ENCODE measurements at regions of chr10 and their contacts with region 1.

Region 1: DNA sequence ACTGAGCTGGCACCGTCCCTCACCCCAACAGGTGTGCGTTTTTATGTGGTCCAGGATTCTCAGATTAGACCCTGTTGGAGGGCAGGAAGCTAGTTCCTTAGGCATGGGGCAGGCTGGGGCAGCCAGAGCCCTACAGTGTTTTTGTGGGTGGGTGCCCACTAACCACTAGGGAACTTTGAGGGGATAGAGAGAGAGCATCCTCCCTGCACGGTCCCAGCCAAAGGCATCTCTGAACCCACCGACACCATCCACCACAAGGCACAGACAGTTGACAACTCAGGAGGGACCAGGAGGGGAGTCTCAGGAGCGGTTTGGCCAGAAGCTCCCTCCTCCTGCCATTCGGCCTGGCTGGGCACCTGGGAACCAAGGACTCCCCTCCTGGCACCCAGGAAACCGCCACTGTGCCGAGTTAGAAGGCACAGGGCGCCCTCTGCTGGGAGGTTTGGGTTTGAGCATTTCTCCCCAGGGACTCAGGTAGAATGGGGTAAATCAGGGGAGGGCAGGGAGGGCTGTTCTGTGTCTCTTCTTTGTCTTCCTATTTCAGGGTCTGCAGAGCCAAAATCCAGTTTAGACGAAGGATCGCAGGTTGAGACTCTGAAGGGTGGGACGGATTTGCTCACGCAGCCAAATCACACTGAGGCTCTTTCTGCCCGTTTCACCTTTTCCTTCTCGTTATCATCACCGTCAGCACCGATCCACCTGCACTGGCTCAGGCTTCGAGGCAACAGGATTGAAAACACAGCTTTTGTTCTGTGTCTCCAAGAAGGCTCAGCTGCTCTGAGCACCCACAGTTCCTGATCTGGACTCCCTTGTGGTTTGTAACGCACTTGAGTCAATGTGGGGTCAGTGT is 84.8 kb upstream of the COL13A1 start:
- DNase-seq: peak; percentile 67
- ATAC-seq: peak; percentile 55
- H3K4me3 Mint-ChIP-seq: no peak overlapping the region
- H3K27ac Mint-ChIP-seq: no peak overlapping the region
- H3K4me1 Mint-ChIP-seq: no peaks in the 10 kb centered on the region
- H3K27me3 Mint-ChIP-seq: peaks cover 6% of the 10 kb centered on the region

Region 2: DNA sequence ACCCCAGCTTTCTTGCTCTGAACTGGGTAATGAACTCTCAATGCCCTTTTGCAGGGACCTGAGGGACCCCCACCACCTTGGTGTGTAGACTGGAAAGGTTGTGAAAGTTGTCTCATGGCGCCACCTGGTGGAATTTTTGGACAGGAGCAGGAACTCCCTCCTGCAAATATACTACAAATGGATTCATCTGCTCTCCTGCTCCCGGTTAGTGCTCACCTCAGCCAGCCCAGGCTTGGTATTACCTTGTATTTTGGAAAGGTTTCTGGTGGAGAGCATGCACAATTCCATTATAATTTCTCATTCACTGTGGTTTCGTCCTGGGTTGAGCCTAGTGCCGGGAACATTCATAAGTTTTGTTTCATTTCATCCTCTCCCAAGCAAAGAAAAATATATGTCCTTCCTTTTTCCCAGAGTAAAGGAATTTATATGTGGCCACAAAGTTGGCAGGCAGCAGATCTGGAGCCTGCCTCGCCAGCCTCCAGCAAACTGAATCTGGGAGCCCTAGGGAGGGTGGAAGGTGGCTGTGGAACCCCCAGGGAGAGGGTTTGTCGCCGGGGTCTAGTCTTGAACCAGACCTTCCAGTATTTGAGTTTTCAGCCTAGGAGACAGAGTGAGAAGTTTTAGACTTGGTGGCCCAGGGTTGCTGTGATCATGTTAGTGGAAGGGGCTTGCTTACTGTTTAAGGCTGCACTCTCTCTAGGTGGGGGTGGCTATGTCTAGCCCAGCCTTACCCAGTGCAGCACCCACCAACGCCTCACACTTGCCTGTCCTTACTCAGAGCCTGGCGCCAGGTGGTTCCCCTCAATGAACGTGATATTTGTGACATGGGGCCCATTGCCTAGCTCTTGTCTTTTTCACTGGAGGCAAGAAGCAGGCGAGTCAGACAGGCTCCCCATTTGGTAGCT is 77.4 kb before region 1 on chr10:
- CTCF ChIA-PET with region 1: interaction called, 55 read pairs
- DNase-seq: peak; percentile 72
- ATAC-seq: peak; percentile 78
- H3K4me3 Mint-ChIP-seq: no peak overlapping the region
- H3K27ac Mint-ChIP-seq: no peak overlapping the region
- H3K4me1 Mint-ChIP-seq: no peaks in the 10 kb centered on the region
- H3K27me3 Mint-ChIP-seq: no peaks in the 10 kb centered on the region

Region 3: GRCh38 chr10:69644658-69645295 is 72.2 kb before region 1 on chr10:
- CTCF ChIA-PET with region 1: interaction called, 55 read pairs
- DNase-seq: peak; percentile 60
- ATAC-seq: no peak
- H3K4me3 Mint-ChIP-seq: no peak overlapping the region
- H3K27ac Mint-ChIP-seq: no peak overlapping the region
- H3K4me1 Mint-ChIP-seq: no peaks in the 10 kb centered on the region
- H3K27me3 Mint-ChIP-seq: no peaks in the 10 kb centered on the region